Ovary (tissue), 10 donors: ENCODE measurements at regions of chr14 and their contacts with region 1.

Region 1: DNA sequence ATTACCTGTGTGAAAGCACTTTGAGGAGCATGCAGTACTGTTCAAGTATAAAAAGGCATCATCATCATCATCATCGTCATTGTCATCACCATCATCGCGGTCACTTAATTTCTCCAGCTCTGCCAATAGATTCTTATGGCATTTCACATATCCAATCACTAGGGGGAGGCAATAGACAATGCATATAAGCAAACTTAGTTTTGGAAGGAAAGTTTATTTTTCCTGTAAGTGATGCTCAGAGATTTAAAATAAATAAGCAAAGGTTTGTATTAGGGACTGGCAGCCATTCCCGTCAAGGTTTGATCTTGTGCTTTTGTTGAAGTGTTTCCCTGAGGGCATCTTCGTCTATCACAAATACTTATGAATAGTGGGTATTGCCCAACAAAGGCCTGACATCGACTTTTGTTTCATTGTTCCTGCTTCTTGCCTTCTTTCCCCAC is 127.4 kb downstream of the KTN1 start:
- DNase-seq: no peak
- H3K4me3 ChIP-seq: no peak overlapping the region
- H3K27ac ChIP-seq: no peak overlapping the region
- H3K4me1 ChIP-seq: no peaks in the 10 kb centered on the region
- H3K27me3 ChIP-seq: no peaks in the 10 kb centered on the region
- CTCF ChIP-seq: peak in 2 of 3 donors; percentile 66 to 67
- EP300 ChIP-seq: no peak
- POLR2A ChIP-seq: no peak

Region 2: GRCh38 chr14:56339855-56340701 is 632.7 kb after region 1 on chr14:
- intact Hi-C with region 1: loop called in 1 of 4 experiments (anchors 5 kb)
- DNase-seq: peak; percentile 70 to 83 (median 82)
- H3K4me3 ChIP-seq: no peak overlapping the region
- H3K27ac ChIP-seq: no peak overlapping the region
- H3K4me1 ChIP-seq: peaks cover 11% of the 10 kb centered on the region
- H3K27me3 ChIP-seq: no peaks in the 10 kb centered on the region
- CTCF ChIP-seq: peak; percentile 53 to 79 (median 67)
- EP300 ChIP-seq: no peak
- POLR2A ChIP-seq: no peak

Region 3: GRCh38 chr14:56422703-56423213 is 715.4 kb after region 1 on chr14:
- intact Hi-C with region 1: loop called in 1 of 4 experiments (anchors 10 kb)
- DNase-seq: peak; percentile 55 to 64 (median 57)
- H3K4me3 ChIP-seq: no peak overlapping the region
- H3K27ac ChIP-seq: no peak overlapping the region
- H3K4me1 ChIP-seq: no peaks in the 10 kb centered on the region
- H3K27me3 ChIP-seq: no peaks in the 10 kb centered on the region
- CTCF ChIP-seq: peak; percentile 53 to 76 (median 71)
- EP300 ChIP-seq: no peak
- POLR2A ChIP-seq: no peak

Region 4: DNA sequence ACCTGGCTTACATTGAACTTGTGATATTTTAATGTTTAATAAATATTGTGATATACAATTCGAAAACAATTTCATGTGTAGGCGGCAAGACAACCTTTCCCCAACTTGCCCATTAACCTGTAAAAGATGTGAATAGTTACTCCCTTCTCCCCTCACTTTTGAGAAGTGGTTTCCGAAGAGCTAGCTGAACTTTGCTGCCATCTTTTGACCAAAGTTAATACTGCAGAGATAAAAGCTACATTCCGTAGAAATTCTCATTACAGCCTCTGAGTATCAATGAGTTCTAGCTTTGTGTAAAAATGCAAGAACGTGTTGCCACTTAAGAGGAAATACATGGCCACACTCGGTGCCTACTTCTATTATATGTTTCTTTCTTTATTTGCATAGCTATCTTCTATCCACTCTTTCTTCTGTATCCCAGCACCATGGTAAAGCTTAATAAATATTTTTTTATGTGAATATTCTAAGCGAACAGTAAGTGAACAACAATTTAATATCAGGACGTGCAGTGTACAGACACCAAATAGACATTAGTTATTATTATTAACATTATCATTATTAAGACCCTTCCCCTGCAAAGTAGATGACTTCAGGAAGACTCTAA is 767.1 kb after region 1 on chr14:
- intact Hi-C with region 1: loop called in 3 of 4 experiments (anchors 5 to 10 kb)
- DNase-seq: no peak
- H3K4me3 ChIP-seq: no peak overlapping the region
- H3K27ac ChIP-seq: no peak overlapping the region
- H3K4me1 ChIP-seq: no peaks in the 10 kb centered on the region
- H3K27me3 ChIP-seq: no peaks in the 10 kb centered on the region
- CTCF ChIP-seq: peak; percentile 32 to 58 (median 53)
- EP300 ChIP-seq: no peak
- POLR2A ChIP-seq: no peak

Region 5: DNA sequence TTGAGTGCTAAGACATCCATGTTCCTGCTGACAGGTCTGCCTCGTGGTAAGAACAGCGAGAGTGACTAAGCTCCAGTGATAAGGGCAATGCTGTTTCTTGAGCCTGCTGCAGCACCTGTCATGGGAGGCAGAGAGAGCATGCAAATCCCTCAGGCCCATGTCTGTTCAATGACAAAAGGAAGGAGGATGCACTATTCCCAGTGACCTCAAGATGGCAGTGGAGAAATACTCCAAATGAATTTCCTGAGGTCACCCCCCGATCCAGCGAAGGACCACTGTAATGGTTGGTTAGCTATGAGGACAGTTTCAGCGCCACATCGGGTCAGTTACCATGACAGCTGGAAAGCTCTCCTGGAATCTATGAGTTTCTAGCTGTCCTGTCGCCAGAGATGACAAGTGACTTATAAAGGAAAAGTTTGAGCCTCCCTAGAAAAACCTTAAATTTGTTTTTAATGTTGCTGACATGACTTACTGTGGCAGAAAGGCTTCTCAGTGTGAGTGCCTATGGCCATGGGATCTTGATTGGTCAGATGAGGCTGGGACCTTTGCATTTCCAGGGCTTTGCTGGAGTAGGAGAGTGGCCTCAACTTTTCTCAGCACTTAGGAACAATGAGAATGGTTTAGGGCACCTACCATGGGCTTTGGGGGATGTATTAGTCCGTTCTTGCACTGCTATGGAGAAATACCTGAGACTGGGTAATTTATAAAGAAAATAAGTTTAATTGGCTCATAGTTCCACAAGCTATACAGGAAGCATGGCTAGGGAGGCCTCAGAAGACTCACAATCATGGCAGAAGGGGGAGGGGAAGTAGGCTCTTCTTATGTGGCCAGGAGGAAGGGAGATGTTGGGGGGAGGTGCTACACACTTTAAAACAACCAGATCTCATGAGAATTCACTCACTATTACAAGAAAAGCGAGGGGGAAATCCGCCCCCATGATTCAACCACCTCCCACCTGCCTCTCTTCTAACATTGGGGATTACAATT is 784.2 kb after region 1 on chr14:
- intact Hi-C with region 1: no loop called
- DNase-seq: peak in 4 of 5 donors; percentile 18 to 41 (median 34)
- H3K4me3 ChIP-seq: no peak overlapping the region
- H3K27ac ChIP-seq: no peak overlapping the region
- H3K4me1 ChIP-seq: no peaks in the 10 kb centered on the region
- H3K27me3 ChIP-seq: no peaks in the 10 kb centered on the region
- CTCF ChIP-seq: peak; percentile 35 to 54 (median 43)
- EP300 ChIP-seq: no peak
- POLR2A ChIP-seq: no peak